HepG2 (cell line): ENCODE measurements at regions of chr6 and their contacts with region 1.

Region 1: GRCh38 chr6:24064082-24064481 is 61.9 kb upstream of the NRSN1 start:
- DNase-seq: peak; percentile 62
- ATAC-seq: peak; percentile 92
- H3K4me3 ChIP-seq: no peak overlapping the region
- H3K27ac ChIP-seq: no peak overlapping the region
- H3K4me1 ChIP-seq: no peaks in the 10 kb centered on the region
- H3K27me3 ChIP-seq: no peaks in the 10 kb centered on the region
- CTCF ChIP-seq: peak; percentile 87
- EP300 ChIP-seq: no peak
- POLR2A ChIP-seq: no peak
- RAD21 ChIP-seq: peak; percentile 87

Region 2: DNA sequence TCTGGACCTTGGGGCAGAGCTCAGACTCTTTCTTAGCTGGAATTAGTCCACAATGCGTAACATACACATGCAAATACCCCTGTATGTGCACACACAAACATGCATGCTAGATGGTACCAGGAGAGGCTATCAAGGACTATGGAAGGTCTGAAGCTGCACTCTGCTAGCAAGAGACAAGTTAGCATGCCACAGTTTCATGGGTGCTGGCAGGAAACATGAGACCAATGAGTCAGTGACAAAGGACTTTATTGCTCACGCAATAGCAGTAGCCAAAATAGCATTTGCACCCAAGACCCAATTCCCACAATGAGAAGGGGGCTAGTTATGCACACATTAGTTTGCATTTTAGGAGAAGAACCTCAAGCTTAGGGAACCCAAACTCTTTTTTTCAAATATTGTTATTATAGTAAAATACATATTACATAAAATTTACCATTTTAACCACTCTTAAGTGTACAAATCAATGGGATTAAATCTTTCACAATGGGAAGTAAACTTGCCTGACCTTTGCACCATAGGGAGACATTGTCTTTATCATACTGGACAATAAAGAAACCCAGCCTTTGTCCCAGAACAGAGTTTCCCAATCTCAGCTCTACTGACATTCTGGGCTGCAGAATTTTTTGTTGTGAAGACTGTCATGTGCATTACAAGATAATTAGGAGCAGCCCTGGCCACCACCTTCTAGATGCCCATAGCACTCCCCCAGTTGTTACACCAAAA is 131.1 kb after region 1 on chr6:
- CTCF ChIA-PET with region 1: no interaction called
- POLR2A ChIA-PET with region 1: no interaction called
- in situ Hi-C with region 1: loop called (anchors 10 kb)
- intact Hi-C with region 1: no loop called
- DNase-seq: peak; percentile 92
- ATAC-seq: peak; percentile 80
- H3K4me3 ChIP-seq: no peak overlapping the region
- H3K27ac ChIP-seq: peak overlapping the region; percentile 60
- H3K4me1 ChIP-seq: peaks cover 71% of the 10 kb centered on the region
- H3K27me3 ChIP-seq: no peaks in the 10 kb centered on the region
- CTCF ChIP-seq: no peak
- EP300 ChIP-seq: peak in 1 of 2 experiments; percentile 71; a peak in 2 of 4 replicates
- POLR2A ChIP-seq: no peak
- RAD21 ChIP-seq: no peak

Region 3: DNA sequence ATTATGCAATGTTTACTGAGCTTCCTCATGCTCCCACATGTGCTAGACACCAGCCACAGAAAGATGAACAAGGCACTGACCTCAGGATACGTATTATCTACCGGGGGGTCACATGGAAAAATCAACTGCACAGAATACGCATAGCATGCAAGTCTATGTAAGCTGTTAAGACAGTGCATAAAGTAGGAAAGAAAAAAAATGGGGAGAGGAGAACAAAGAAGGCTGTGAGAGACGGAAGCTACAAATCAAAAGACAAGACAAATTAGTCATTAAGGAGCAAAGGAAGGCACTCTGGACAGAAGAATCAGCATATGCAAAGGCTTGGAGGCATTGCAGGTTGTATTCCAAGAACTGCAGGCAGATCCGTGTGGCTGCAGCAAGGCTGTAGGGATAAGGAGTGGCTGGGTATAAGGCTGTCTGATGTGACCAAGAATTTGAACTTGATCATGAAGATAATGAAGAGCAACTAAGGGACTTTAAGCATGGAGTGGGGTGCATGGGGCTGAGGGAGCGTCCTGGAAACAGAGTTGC is 150.9 kb after region 1 on chr6:
- CTCF ChIA-PET with region 1: no interaction called
- POLR2A ChIA-PET with region 1: no interaction called
- in situ Hi-C with region 1: no loop called
- intact Hi-C with region 1: no loop called
- DNase-seq: no peak
- ATAC-seq: no peak
- H3K4me3 ChIP-seq: no peak overlapping the region
- H3K27ac ChIP-seq: no peak overlapping the region
- H3K4me1 ChIP-seq: no peaks in the 10 kb centered on the region
- H3K27me3 ChIP-seq: no peaks in the 10 kb centered on the region
- CTCF ChIP-seq: no peak
- EP300 ChIP-seq: no peak
- POLR2A ChIP-seq: no peak
- RAD21 ChIP-seq: no peak

Region 4: DNA sequence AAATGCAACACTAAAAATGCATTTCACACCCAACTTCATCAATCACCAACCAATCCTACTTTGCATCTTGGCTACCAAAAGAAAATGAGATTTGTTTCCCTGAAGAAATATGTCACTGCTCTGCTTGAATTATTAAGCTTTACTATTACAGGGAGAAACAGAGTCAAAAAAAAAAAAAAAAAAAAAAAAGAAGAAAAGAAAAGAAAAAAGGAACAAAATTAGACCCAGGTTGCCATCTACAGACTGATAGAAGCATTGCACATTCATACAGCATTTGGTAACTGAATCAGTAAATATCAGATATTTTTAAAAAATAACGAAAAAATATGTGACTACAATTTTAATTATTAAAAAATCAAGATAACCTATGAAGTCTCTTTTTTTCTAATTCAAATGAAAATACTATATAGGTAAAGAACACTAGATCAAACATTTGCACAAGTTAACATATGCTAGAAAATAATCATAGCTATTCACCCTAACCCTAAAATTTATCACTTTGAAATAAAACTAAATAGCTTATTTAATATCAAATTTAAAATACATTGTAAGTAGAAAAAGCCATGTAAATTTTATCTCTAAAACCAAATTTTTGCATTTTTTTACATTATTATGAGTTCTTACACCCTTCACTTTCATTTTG is 210.5 kb after region 1 on chr6:
- CTCF ChIA-PET with region 1: interaction called, 25 read pairs
- POLR2A ChIA-PET with region 1: no interaction called
- in situ Hi-C with region 1: loop called (anchors 5 kb)
- intact Hi-C with region 1: loop called (anchors 1 kb)
- DNase-seq: no peak
- ATAC-seq: no peak
- H3K4me3 ChIP-seq: no peak overlapping the region
- H3K27ac ChIP-seq: no peak overlapping the region
- H3K4me1 ChIP-seq: no peaks in the 10 kb centered on the region
- H3K27me3 ChIP-seq: no peaks in the 10 kb centered on the region
- CTCF ChIP-seq: peak; percentile 51
- EP300 ChIP-seq: no peak
- POLR2A ChIP-seq: no peak
- RAD21 ChIP-seq: no peak

Region 5: GRCh38 chr6:24394780-24395437 is 330.8 kb after region 1 on chr6:
- CTCF ChIA-PET with region 1: no interaction called
- POLR2A ChIA-PET with region 1: no interaction called
- in situ Hi-C with region 1: loop called (anchors 10 kb)
- intact Hi-C with region 1: loop called (anchors 5 kb)
- DNase-seq: no peak
- ATAC-seq: no peak
- H3K4me3 ChIP-seq: no peak overlapping the region
- H3K27ac ChIP-seq: no peak overlapping the region
- H3K4me1 ChIP-seq: peaks cover 21% of the 10 kb centered on the region
- H3K27me3 ChIP-seq: no peaks in the 10 kb centered on the region
- CTCF ChIP-seq: no peak
- EP300 ChIP-seq: no peak
- POLR2A ChIP-seq: no peak
- RAD21 ChIP-seq: no peak